CD14-positive monocyte (primary cell): ENCODE measurements at regions of chr15 and their contacts with region 1.

Region 1: DNA sequence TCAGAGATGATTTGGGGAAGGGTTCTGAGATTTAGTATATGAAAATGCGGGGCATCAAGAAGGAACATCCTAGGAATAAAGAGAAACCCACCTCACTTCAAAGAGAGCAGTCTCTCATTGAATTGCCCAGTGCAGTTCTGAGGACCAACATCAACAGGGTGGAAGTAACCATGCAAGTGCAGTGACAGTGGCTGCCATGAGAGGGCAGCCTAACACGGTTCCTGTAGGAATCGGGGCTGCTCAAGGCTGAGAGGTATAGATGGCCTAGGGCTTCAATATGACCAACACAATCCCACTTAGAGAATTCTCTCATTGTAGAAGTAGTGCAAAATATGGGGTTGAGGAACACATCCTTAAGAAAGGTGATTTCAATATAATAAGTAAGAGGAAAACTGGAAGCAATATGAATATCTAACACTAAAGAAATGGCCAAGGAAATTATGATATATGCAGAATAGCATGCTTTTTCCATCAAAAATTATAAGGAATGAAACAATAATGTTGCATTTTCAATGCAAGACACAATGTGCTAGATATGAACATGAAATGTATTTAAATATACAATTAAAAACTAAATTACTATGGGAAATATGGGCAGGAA is 51.1 kb upstream of the ARRDC4 start:
- DNase-seq: peak; percentile 30 to 62 (median 53)
- H3K4me3 ChIP-seq: no peak overlapping the region
- H3K4me3 Mint-ChIP-seq: no peak overlapping the region
- H3K27ac ChIP-seq: no peak overlapping the region
- H3K27ac Mint-ChIP-seq: peak overlapping the region in 1 of 7 donors; percentile 63
- H3K4me1 ChIP-seq: peaks cover 0 to 3% of the 10 kb centered on the region in 2 donors
- H3K4me1 Mint-ChIP-seq: peaks cover 7% of the 10 kb centered on the region
- H3K27me3 ChIP-seq: peaks cover 0 to 8% of the 10 kb centered on the region in 2 donors
- H3K27me3 Mint-ChIP-seq: peaks cover 15 to 27% (median 18%) of the 10 kb centered on the region in 3 donors
- CTCF ChIP-seq: peak; percentile 92

Region 2: DNA sequence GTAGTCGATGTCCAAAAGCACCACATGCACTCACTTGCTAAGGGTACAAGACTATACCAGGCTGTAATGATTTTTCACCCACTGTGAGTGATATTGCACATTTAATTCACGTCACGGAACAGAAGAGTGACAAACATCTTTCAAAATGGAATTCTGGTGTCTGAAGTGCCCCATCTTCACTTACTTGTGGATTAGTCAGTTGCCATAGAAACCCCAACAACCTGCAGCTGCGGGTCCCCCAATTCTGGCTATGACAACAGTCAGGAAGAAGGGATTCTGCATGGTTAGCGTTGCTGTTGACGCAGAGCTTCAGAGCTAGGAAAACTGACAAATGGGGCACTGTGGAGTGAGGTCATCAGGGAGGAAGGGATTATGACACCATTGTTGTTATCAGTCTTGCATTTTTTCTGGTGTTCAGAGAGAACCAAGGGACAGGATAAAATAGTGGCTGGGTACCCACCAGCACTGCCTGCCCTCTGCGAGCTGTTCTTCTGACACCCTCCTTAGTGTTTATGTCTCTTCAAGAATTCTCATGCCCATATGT is 316.7 kb before region 1 on chr15:
- intact Hi-C with region 1: no loop called
- DNase-seq: no peak
- H3K4me3 ChIP-seq: no peak overlapping the region
- H3K4me3 Mint-ChIP-seq: no peak overlapping the region
- H3K27ac ChIP-seq: no peak overlapping the region
- H3K27ac Mint-ChIP-seq: no peak overlapping the region
- H3K4me1 ChIP-seq: no peaks in the 10 kb centered on the region
- H3K4me1 Mint-ChIP-seq: no peaks in the 10 kb centered on the region
- H3K27me3 ChIP-seq: no peaks in the 10 kb centered on the region
- H3K27me3 Mint-ChIP-seq: no peaks in the 10 kb centered on the region
- CTCF ChIP-seq: no peak

Region 3: DNA sequence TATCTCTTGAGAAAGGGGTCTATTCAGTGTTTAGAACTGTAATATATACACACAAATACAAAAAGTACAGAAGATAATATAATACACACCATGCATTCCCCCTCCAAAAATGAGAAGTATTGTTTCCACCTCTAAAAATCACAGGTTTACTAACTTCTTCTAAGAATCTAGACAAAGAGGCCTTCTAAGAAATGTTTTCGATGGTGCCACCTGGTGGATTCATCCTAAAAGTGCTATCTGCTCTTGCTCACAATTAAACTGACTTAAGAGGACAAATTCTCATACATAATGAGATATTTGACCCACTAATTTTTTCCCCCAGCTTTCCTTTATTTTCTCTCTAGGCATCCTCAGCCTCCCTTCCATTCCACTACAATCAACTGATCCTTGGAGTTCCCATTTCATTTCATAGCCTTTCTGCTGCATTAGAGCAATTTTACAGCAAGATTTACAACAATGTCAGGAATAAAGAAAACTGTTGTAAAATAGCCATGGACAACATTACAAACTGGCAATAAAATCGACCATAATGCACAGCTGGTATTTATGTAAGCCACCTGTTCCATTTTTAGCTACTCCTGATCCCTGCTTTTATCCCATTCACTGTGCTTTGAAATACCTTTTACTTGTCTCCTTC is 175.7 kb after region 1 on chr15:
- intact Hi-C with region 1: loop called (anchors 2 kb)
- DNase-seq: peak; percentile 39 to 70 (median 48)
- H3K4me3 ChIP-seq: no peak overlapping the region
- H3K4me3 Mint-ChIP-seq: no peak overlapping the region
- H3K27ac ChIP-seq: no peak overlapping the region
- H3K27ac Mint-ChIP-seq: peak overlapping the region in 1 of 7 donors; percentile 35
- H3K4me1 ChIP-seq: no peaks in the 10 kb centered on the region
- H3K4me1 Mint-ChIP-seq: peaks cover 3% of the 10 kb centered on the region
- H3K27me3 ChIP-seq: no peaks in the 10 kb centered on the region
- H3K27me3 Mint-ChIP-seq: peaks cover 0 to 6% (median 1%) of the 10 kb centered on the region in 3 donors
- CTCF ChIP-seq: peak; percentile 73

Region 4: GRCh38 chr15:98177924-98178592 is 268.7 kb after region 1 on chr15:
- intact Hi-C with region 1: loop called (anchors 5 kb)
- DNase-seq: peak; percentile 16 to 33 (median 27)
- H3K4me3 ChIP-seq: no peak overlapping the region
- H3K4me3 Mint-ChIP-seq: no peak overlapping the region
- H3K27ac ChIP-seq: no peak overlapping the region
- H3K27ac Mint-ChIP-seq: peak overlapping the region in 1 of 7 donors; percentile 38
- H3K4me1 ChIP-seq: no peaks in the 10 kb centered on the region
- H3K4me1 Mint-ChIP-seq: peaks cover 1% of the 10 kb centered on the region
- H3K27me3 ChIP-seq: peaks cover 0 to 6% of the 10 kb centered on the region in 2 donors
- H3K27me3 Mint-ChIP-seq: peaks cover 9 to 20% (median 18%) of the 10 kb centered on the region in 3 donors
- CTCF ChIP-seq: peak; percentile 66

Region 5: GRCh38 chr15:98292442-98293240 is 383.2 kb after region 1 on chr15:
- intact Hi-C with region 1: loop called in 1 of 2 experiments (anchors 10 kb)
- DNase-seq: no peak
- H3K4me3 ChIP-seq: no peak overlapping the region
- H3K4me3 Mint-ChIP-seq: peak overlapping the region in 1 of 2 donors; percentile 77
- H3K27ac ChIP-seq: no peak overlapping the region
- H3K27ac Mint-ChIP-seq: no peak overlapping the region
- H3K4me1 ChIP-seq: no peaks in the 10 kb centered on the region
- H3K4me1 Mint-ChIP-seq: no peaks in the 10 kb centered on the region
- H3K27me3 ChIP-seq: peaks cover 0 to 6% of the 10 kb centered on the region in 2 donors
- H3K27me3 Mint-ChIP-seq: peaks cover 16 to 30% (median 22%) of the 10 kb centered on the region in 3 donors
- CTCF ChIP-seq: peak; percentile 69

Region 6: GRCh38 chr15:98428253-98428989 is 519.0 kb after region 1 on chr15:
- intact Hi-C with region 1: loop called in 1 of 2 experiments (anchors 10 kb)
- DNase-seq: peak; percentile 12 to 33 (median 19)
- H3K4me3 ChIP-seq: peak overlapping the region in 1 of 3 experiments; percentile 61
- H3K4me3 Mint-ChIP-seq: peak overlapping the region; percentile 44 to 86
- H3K27ac ChIP-seq: no peak overlapping the region
- H3K27ac Mint-ChIP-seq: no peak overlapping the region
- H3K4me1 ChIP-seq: peaks cover 9 to 10% of the 10 kb centered on the region in 2 donors
- H3K4me1 Mint-ChIP-seq: peaks cover 9% of the 10 kb centered on the region
- H3K27me3 ChIP-seq: peaks cover 3 to 25% of the 10 kb centered on the region in 2 donors
- H3K27me3 Mint-ChIP-seq: peaks cover 40 to 46% (median 44%) of the 10 kb centered on the region in 3 donors
- CTCF ChIP-seq: peak; percentile 90